ENCODE measurements at regions of chr15 and their contacts with region 1.

Region 1: GRCh38 chr15:38683382-38684242 is 119.0 kb upstream of the RASGRP1 start:
- DNase-seq: peak; percentile 58 to 90
- ATAC-seq: peak; percentile 89 to 98 (median 97)
- H3K4me3 ChIP-seq: no peak overlapping the region
- H3K4me3 Mint-ChIP-seq: peak overlapping the region; percentile 7
- H3K27ac ChIP-seq: no peak overlapping the region
- H3K27ac Mint-ChIP-seq: peak overlapping the region; percentile 41 to 80
- H3K4me1 ChIP-seq: peaks cover 46% of the 10 kb centered on the region
- H3K4me1 Mint-ChIP-seq: peaks cover 41 to 43% of the 10 kb centered on the region in 2 donors
- H3K27me3 ChIP-seq: no peaks in the 10 kb centered on the region
- H3K27me3 Mint-ChIP-seq: no peaks in the 10 kb centered on the region
- CTCF ChIP-seq: peak; percentile 90

Region 2: DNA sequence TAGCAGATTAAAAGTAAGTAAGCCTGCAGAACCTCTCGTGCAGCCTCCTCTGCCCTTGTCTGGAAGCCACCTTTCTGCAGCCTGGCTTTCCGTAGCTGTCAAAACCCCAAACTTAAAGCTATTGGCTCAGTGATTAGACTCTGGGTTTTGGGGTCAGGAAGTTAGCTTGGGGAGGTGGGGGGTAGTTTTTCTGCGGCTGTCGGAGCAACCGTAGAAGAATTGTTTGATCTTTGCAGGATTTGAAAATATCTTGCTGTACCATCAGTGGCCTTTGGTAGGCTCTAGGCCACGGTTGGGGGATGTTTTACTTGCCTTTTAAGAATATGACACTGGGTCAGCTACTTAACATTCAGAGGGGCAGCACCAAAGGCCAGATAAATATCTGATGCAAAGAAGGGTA is 30.6 kb before region 1 on chr15:
- intact Hi-C with region 1: loop called (anchors 1 kb)
- DNase-seq: peak; percentile 70 to 95
- ATAC-seq: peak; percentile 77 to 89 (median 84)
- H3K4me3 ChIP-seq: no peak overlapping the region
- H3K4me3 Mint-ChIP-seq: peak overlapping the region; percentile 89
- H3K27ac ChIP-seq: peak overlapping the region; percentile 75
- H3K27ac Mint-ChIP-seq: peak overlapping the region; percentile 95 to 96
- H3K4me1 ChIP-seq: peaks cover 45% of the 10 kb centered on the region
- H3K4me1 Mint-ChIP-seq: peaks cover 65 to 66% of the 10 kb centered on the region in 2 donors
- H3K27me3 ChIP-seq: no peaks in the 10 kb centered on the region
- H3K27me3 Mint-ChIP-seq: no peaks in the 10 kb centered on the region
- CTCF ChIP-seq: peak; percentile 27

Region 3: GRCh38 chr15:38699633-38700230 is 16.1 kb after region 1 on chr15:
- intact Hi-C with region 1: loop called (anchors 1 kb)
- DNase-seq: peak; percentile 50 to 90
- ATAC-seq: peak; percentile 49 to 72 (median 51)
- H3K4me3 ChIP-seq: no peak overlapping the region
- H3K4me3 Mint-ChIP-seq: peak overlapping the region; percentile 4
- H3K27ac ChIP-seq: no peak overlapping the region
- H3K27ac Mint-ChIP-seq: peak overlapping the region; percentile 41 to 59
- H3K4me1 ChIP-seq: peaks cover 26% of the 10 kb centered on the region
- H3K4me1 Mint-ChIP-seq: peaks cover 36 to 39% of the 10 kb centered on the region in 2 donors
- H3K27me3 ChIP-seq: no peaks in the 10 kb centered on the region
- H3K27me3 Mint-ChIP-seq: no peaks in the 10 kb centered on the region
- CTCF ChIP-seq: peak; percentile 85

Measured in natural killer cell (primary cell).